Activated CD4-positive, alpha-beta T cell treated with anti-CD3 and anti-CD28 coated beads for 36 hours (primary cell): ENCODE measurements at regions of chr14 and their contacts with region 1.

Region 1: DNA sequence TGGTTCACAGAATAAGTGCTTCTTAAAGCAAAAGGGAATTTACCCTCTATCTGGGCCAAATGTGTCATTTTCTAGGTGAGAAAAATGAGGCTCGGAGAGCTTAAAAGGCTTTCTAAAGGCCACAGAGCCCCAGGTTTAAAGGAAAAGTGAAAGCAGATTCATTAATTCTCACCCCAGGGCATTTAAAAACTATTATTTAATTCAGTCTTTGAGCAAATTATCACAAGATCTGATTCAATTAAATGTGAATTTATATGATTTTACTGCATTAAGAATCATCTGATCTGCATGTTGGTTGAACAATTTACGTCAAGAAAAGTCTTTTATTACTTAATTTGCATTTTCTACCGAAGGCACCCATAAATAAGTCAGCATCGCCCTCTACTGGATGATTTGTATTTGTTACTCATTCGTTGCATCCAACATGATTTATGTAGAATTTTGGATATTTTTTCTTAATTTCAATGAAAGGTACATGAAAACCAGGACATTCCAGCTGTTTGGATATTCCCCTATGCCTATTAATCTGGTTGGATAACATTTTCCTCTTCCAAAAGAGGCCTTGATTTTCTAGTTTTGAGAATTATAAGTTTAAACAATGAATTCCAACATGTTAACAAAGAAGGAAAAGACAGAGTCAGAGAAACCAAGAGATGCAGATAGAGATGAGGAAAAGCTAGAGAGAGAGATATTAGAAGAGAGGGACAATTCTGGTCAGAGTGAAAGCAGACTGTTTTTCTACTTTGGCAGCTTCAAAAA is 19.1 kb upstream of the DHRS7 start:
- DNase-seq: no peak
- ATAC-seq: peak; percentile 83
- H3K4me3 Mint-ChIP-seq: peak overlapping the region; percentile 59
- H3K27ac Mint-ChIP-seq: peak overlapping the region; percentile 82
- H3K4me1 Mint-ChIP-seq: peaks cover 15% of the 10 kb centered on the region
- H3K27me3 Mint-ChIP-seq: no peaks in the 10 kb centered on the region

Region 2: GRCh38 chr14:59126710-59127432 is 1057.5 kb before region 1 on chr14:
- CTCF ChIA-PET with region 1: interaction called, 4 read pairs
- POLR2A ChIA-PET with region 1: no interaction called
- intact Hi-C with region 1: loop called (anchors 2 to 5 kb)
- DNase-seq: peak; percentile 33
- ATAC-seq: peak; percentile 77
- H3K4me3 Mint-ChIP-seq: no peak overlapping the region
- H3K27ac Mint-ChIP-seq: no peak overlapping the region
- H3K4me1 Mint-ChIP-seq: no peaks in the 10 kb centered on the region
- H3K27me3 Mint-ChIP-seq: peaks cover 8% of the 10 kb centered on the region

Region 3: DNA sequence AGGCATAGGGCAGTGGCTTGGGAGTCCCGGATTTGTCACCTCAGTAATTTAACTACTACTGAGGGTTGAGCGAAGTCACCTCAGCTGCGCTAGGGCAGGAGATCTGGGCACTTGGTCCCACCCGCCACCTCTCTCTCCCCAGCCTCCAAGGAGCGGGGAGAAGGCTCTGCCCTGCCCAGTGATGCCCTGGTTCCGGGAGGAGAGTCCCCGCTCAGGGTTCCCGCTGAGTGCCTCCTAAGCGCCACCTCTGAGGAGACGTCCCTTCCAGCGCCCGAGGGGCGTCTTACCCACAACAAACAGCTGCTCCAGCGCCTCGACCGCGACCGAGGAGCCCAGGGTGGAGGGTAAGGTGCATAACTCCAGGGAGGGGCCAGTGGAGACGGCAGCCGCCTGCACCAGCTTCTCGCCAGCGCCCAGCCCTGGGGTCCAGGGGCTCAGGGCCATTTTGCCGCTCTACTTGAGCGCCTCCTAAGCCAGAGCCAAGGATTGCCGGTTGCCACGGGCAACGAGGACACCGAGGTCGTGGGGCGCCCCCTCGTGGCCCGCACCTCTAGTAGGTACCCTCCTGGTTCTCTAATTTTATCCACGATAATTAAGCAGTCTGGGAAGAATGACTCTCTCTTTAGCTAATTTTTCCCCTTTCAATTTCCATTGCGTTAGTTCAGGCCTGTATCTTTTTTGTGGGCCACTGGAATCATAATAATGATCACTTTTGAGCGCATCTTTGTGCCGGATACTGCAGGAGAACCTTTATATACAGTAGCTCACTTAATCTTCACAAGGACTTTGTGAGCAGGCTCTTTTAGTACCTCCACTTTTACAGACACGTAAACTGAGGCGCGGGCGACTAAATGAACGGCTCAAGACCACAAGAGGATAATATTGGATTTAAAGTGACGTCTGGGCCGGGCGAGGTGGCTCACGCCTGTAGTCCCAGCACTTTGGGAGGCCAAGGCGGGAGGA is 607.7 kb before region 1 on chr14 and contains the start of gene CCDC175:
- CTCF ChIA-PET with region 1: interaction called, 4 read pairs
- POLR2A ChIA-PET with region 1: no interaction called
- intact Hi-C with region 1: loop called (anchors 5 kb)
- DNase-seq: peak; percentile 93
- ATAC-seq: peak; percentile 99
- H3K4me3 Mint-ChIP-seq: peak within 1 kb of the TSS; percentile 68
- H3K27ac Mint-ChIP-seq: no peak within 1 kb of the TSS
- H3K4me1 Mint-ChIP-seq: peaks cover 7% of the 10 kb centered on the region
- H3K27me3 Mint-ChIP-seq: peaks cover 12% of the 10 kb centered on the region
- total RNA-seq, gene CCDC175: not detected

Region 4: DNA sequence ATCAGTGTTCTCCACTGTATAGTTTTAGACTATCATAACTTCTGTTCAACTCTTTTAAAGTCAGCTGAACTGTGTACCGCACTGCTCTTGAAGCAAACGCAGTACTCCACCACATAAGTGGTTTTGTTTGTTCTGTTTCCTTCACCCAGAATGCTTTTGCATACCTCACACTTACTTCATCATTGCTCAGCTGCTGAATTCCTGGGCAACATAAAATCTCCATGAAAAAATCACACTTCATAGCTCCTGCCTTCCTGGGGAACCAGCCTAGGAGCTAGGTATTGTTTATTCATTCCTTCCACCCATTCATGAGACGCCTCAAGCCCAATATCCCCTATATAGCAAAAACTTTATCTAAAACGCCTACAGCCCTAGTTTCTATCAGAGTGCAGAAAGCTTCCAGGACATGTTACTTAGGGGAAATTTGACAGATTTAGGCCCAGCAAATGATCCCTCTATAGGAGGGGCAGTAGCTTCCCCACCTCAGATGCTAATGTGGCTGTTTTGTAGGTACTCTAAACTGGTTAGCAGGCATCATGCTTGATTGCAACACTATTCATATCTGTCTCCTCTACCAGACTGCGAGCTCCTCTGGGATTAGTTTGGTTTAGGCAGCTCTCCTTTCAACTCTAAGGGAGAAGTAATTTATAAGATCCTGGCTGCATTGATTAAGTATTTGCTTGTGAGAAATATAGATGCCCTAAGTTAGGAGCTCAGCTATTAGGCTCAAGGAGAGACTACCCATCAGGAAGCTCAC is 219.9 kb before region 1 on chr14:
- CTCF ChIA-PET with region 1: interaction called, 120 read pairs
- POLR2A ChIA-PET with region 1: interaction called, 4 read pairs
- intact Hi-C with region 1: loop called (anchors 1 kb)
- DNase-seq: peak; percentile 3
- ATAC-seq: peak; percentile 14
- H3K4me3 Mint-ChIP-seq: peak overlapping the region; percentile 82
- H3K27ac Mint-ChIP-seq: peak overlapping the region; percentile 95
- H3K4me1 Mint-ChIP-seq: peaks cover 19% of the 10 kb centered on the region
- H3K27me3 Mint-ChIP-seq: peaks cover 5% of the 10 kb centered on the region

Region 5: DNA sequence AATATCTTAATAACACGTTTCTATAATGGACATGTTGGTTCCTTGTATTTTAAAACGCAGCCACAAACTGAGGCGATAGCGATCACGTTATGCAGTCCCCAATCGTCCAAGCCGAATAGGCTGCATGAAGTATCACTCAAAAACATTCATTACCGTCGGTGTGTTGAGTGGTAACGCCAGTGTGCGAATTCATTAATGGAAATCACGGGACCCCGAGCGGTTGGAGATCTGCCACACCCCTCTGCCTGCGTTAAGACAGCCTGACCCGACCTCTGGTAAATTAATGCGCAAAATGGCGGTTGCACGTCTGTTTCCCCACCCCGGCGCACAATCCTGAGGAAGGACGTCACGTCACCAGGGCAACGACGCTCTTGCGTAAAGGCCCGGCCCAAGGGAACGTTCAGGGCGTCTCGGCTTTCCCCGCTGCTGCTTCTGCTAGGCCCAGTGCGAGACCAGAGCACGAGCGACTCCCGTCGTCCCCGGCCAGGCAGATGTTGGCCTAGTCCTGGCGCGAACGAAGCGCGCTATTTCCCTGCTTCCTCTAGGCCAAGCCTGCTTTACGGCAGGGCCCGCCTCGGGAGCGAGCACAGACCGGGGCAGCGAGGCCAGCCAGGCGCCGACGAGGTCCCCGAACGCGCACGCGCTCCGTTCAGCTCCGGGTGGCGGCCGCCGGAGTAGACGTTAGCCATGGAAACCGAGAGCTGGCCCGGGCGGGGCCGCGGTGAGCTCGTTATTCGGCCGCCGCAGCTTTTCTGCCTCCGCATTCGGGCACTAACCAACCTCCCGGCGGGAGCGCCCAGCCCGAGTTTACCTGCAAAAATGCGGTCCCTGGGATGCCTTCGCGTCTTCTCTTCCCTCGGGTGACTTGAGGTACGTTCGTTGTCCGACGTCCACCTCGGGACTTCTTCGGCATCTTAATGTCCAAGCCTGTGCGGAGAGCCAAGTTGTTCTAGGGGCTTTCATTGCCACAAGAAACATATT is 92.5 kb before region 1 on chr14 and contains the start of gene PCNX4:
- CTCF ChIA-PET with region 1: interaction called, 6 read pairs
- POLR2A ChIA-PET with region 1: no interaction called
- intact Hi-C with region 1: loop called (anchors 1 kb)
- DNase-seq: peak; percentile 96
- ATAC-seq: peak; percentile 96
- H3K4me3 Mint-ChIP-seq: peak within 1 kb of the TSS; percentile 91
- H3K27ac Mint-ChIP-seq: peak within 1 kb of the TSS; percentile 92
- H3K4me1 Mint-ChIP-seq: peaks cover 34% of the 10 kb centered on the region
- H3K27me3 Mint-ChIP-seq: no peaks in the 10 kb centered on the region
- total RNA-seq, gene PCNX4: 27.0 to 27.6 TPM

Region 6: DNA sequence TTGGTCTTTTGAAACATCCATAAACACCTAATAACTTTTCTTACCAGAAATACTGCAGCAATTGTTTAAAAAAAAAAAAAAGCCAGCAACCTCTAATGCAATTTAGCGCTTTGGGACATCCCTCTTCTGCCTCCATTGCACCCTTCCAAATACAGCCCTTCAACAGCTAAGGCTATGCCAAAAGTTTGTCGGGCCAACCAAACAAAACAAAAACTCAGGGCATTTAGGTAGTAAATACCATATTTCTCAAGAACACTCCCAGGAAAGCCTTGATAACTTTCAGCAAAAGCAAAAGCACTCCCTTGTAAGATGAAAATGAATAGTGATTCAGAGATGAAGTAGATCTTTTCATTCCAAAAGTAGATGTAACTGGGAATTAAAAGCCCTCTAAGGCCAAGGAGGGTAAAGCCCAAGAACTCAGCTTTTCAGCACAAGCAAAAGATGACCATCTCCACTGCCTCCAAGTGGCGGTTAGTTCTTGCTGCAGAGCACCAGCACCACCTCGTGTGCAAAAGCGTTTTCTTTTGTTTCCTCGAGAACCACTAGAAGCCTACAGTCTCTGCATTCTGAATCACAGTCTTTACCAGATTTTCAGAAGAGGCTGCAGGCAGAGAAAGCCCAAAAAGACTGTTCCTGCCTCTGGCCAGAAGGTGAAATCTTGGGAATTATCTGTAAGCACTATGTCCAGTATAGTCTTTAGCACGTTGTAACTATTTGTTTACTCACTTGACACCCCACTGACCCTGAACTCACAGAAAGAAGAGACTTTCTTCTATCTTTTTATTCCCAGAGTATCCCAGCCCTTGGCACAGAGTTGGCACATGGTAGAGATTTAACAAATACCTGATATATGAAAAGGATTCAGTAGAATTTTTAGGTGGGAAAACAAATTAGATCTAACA is 377.8 kb after region 1 on chr14:
- CTCF ChIA-PET with region 1: no interaction called
- POLR2A ChIA-PET with region 1: no interaction called
- intact Hi-C with region 1: loop called (anchors 2 to 10 kb)
- DNase-seq: peak; percentile 60
- ATAC-seq: peak; percentile 49
- H3K4me3 Mint-ChIP-seq: no peak overlapping the region
- H3K27ac Mint-ChIP-seq: no peak overlapping the region
- H3K4me1 Mint-ChIP-seq: no peaks in the 10 kb centered on the region
- H3K27me3 Mint-ChIP-seq: peaks cover 1% of the 10 kb centered on the region